CD4-positive, alpha-beta memory T cell (primary cell): ENCODE measurements at regions of chr7 and their contacts with region 1.

Region 1: GRCh38 chr7:82729172-82730030 is 285.8 kb upstream of the CACNA2D1 start:
- DNase-seq: no peak
- H3K4me3 ChIP-seq: no peak overlapping the region
- H3K4me3 Mint-ChIP-seq: no peak overlapping the region
- H3K27ac ChIP-seq: no peak overlapping the region
- H3K27ac Mint-ChIP-seq: no peak overlapping the region
- H3K4me1 ChIP-seq: no peaks in the 10 kb centered on the region
- H3K4me1 Mint-ChIP-seq: no peaks in the 10 kb centered on the region
- H3K27me3 ChIP-seq: no peaks in the 10 kb centered on the region
- H3K27me3 Mint-ChIP-seq: no peaks in the 10 kb centered on the region

Region 2: GRCh38 chr7:81499262-81500116 is 1229.9 kb before region 1 on chr7:
- CTCF ChIA-PET with region 1: no interaction called
- POLR2A ChIA-PET with region 1: no interaction called
- intact Hi-C with region 1: loop called (anchors 5 kb)
- DNase-seq: no peak
- H3K4me3 ChIP-seq: no peak overlapping the region
- H3K4me3 Mint-ChIP-seq: no peak overlapping the region
- H3K27ac ChIP-seq: no peak overlapping the region
- H3K27ac Mint-ChIP-seq: no peak overlapping the region
- H3K4me1 ChIP-seq: no peaks in the 10 kb centered on the region
- H3K4me1 Mint-ChIP-seq: no peaks in the 10 kb centered on the region
- H3K27me3 ChIP-seq: no peaks in the 10 kb centered on the region
- H3K27me3 Mint-ChIP-seq: no peaks in the 10 kb centered on the region

Region 3: DNA sequence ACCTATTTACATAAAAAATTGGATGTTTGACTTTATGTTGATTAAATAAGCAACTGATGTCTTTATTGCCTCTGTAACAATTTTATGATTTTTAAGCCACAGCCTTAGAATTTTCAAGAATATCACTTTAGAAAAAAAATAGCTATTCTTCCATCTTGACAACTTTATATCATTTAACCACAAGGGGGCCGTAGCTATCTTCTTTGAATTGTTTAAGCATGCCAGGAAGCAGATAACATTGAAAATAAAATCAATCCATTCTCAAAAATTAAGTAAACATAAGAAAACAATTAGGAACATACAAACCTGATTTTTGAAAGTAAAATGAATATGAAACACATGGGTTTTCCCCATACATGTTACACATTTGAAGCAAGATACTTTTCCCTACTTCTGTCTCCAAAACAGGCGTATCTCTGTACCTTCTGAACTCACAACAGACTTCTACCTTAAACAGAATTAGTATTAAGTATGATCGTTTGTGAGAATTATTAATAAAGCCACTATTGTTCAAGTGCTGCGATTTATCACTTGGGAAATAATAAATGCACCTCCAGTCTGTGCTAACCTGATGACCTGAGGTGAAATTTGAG is 494.8 kb before region 1 on chr7:
- CTCF ChIA-PET with region 1: no interaction called
- POLR2A ChIA-PET with region 1: no interaction called
- intact Hi-C with region 1: loop called (anchors 5 kb)
- DNase-seq: no peak
- H3K4me3 ChIP-seq: no peak overlapping the region
- H3K4me3 Mint-ChIP-seq: no peak overlapping the region
- H3K27ac ChIP-seq: no peak overlapping the region
- H3K27ac Mint-ChIP-seq: no peak overlapping the region
- H3K4me1 ChIP-seq: no peaks in the 10 kb centered on the region
- H3K4me1 Mint-ChIP-seq: no peaks in the 10 kb centered on the region
- H3K27me3 ChIP-seq: no peaks in the 10 kb centered on the region
- H3K27me3 Mint-ChIP-seq: no peaks in the 10 kb centered on the region

Region 4: GRCh38 chr7:82572195-82572880 is 157.1 kb before region 1 on chr7:
- CTCF ChIA-PET with region 1: no interaction called
- POLR2A ChIA-PET with region 1: no interaction called
- intact Hi-C with region 1: loop called (anchors 10 kb)
- DNase-seq: peak; percentile 20 to 47 (median 29)
- H3K4me3 ChIP-seq: no peak overlapping the region
- H3K4me3 Mint-ChIP-seq: no peak overlapping the region
- H3K27ac ChIP-seq: no peak overlapping the region
- H3K27ac Mint-ChIP-seq: no peak overlapping the region
- H3K4me1 ChIP-seq: no peaks in the 10 kb centered on the region
- H3K4me1 Mint-ChIP-seq: peaks cover 0 to 4% (median 0%) of the 10 kb centered on the region in 4 donors
- H3K27me3 ChIP-seq: no peaks in the 10 kb centered on the region
- H3K27me3 Mint-ChIP-seq: no peaks in the 10 kb centered on the region

Region 5: DNA sequence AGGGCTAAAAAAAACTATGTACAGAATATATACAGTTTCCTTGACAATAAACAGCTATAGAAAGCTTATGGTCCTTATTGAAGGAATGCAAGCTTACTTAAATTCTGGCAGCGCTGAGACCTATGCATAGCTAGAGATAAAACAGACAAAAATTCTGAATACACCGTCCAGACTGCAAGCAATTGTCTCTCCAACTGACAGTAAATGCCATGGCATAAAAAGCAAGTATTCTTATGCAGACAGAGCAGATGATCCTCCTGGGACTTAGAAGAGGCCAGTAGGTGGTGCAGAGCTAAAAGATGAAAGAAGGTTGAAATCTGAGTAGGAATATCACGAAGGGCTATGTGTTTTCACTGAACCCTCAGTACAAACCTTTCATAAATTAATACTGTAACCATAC is 128.9 kb before region 1 on chr7:
- CTCF ChIA-PET with region 1: interaction called, 3 read pairs
- POLR2A ChIA-PET with region 1: no interaction called
- intact Hi-C with region 1: loop called (anchors 5 kb)
- DNase-seq: no peak
- H3K4me3 ChIP-seq: no peak overlapping the region
- H3K4me3 Mint-ChIP-seq: no peak overlapping the region
- H3K27ac ChIP-seq: no peak overlapping the region
- H3K27ac Mint-ChIP-seq: no peak overlapping the region
- H3K4me1 ChIP-seq: no peaks in the 10 kb centered on the region
- H3K4me1 Mint-ChIP-seq: no peaks in the 10 kb centered on the region
- H3K27me3 ChIP-seq: no peaks in the 10 kb centered on the region
- H3K27me3 Mint-ChIP-seq: no peaks in the 10 kb centered on the region